ENCODE measurements at regions of chr22 and their contacts with region 1.

Region 1: GRCh38 chr22:43253839-43254238 is 66.9 kb upstream of the TTLL12 start:
- DNase-seq: no peak
- H3K4me3 Mint-ChIP-seq: no peak overlapping the region
- H3K27ac Mint-ChIP-seq: no peak overlapping the region
- H3K4me1 Mint-ChIP-seq: peaks cover 14% of the 10 kb centered on the region
- H3K27me3 Mint-ChIP-seq: peaks cover 21% of the 10 kb centered on the region

Region 2: DNA sequence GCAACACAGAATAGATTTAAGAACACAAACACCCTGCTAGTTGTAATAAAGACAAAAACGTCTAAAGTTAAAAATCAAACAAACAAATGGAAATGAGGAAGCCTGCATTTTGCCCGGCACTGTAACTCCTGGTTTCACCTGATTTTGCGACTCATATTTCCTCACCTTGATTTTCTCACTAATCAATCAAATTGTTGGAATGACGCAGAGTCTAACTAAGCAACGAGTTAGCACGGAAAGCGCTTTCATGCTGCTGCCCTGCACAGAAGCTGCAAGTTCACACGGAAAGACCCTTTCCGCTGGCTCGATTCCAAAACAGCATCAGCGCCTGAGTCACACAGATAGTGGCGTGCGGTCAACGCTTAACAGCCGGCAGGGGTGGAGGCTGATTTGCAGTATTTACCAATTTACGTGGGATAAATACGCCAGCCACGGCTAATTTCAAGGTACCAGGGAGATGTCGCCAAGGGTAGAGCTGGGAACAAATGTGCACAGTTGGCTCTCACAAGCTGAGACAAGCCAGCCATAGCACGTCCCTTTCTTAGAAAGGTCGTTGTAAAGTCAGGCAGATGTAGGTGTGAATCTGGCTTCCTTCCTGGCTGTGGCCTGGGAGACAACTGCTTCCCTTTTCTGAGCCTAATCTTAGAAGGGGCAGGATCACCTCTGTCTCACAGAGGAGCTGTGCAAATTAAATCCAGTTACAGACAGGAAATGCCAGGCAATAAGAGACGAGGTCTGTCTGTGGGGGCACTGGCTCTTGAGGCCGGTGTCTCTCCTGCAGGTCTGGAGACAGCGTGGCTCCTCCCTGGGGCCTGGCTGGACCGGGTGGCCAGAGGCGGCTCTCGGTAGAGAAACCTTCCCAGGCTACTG is 10.0 kb after region 1 on chr22:
- CTCF ChIA-PET with region 1: interaction called, 15 read pairs
- POLR2A ChIA-PET with region 1: interaction called, 3 read pairs
- DNase-seq: peak; percentile 87
- H3K4me3 Mint-ChIP-seq: peak overlapping the region; percentile 65
- H3K27ac Mint-ChIP-seq: peak overlapping the region; percentile 89
- H3K4me1 Mint-ChIP-seq: peaks cover 30% of the 10 kb centered on the region
- H3K27me3 Mint-ChIP-seq: peaks cover under 1% of the 10 kb centered on the region